PC-3 (cell line): ENCODE measurements at regions of chr7 and their contacts with region 1.

Region 1: GRCh38 chr7:12458520-12459131 is 55.0 kb upstream of the VWDE start:
- DNase-seq: peak; percentile 77
- ATAC-seq: peak; percentile 100
- H3K4me3 ChIP-seq: no peak overlapping the region
- H3K27ac ChIP-seq: no peak overlapping the region
- H3K4me1 ChIP-seq: no peaks in the 10 kb centered on the region
- H3K27me3 ChIP-seq: no peaks in the 10 kb centered on the region
- CTCF ChIP-seq: peak; percentile 88

Region 2: DNA sequence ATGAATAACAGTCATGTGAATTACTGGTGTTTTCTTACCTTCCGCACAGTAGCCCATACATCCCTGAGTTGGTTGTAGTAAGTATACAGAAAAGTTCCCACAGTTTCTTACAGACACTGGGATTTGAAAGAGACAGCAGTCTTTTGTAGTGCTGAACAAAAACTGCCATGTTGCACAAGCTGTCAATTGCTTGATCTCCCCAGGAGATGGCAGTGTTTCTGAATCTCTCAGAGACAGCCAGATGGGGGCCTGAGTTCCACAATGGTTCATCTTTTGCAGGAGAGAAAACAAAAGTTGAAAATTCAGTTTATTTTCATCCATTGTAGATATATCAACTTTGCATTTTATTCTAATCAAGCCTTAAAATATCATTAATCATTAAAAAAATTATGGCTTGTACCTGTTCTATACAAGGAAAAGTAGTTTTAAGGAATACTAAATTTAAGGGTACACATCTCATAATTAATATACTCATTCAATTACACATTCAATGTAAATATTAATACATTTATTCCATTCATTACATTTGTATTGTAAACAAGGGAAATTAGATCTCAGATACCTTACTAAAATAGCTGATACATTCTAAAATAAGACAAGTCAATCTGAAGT is 69.4 kb before region 1 on chr7:
- CTCF ChIA-PET with region 1: interaction called, 3 read pairs
- POLR2A ChIA-PET with region 1: no interaction called
- intact Hi-C with region 1: loop called (anchors 2 kb)
- DNase-seq: peak; percentile 77
- ATAC-seq: peak; percentile 89
- H3K4me3 ChIP-seq: no peak overlapping the region
- H3K27ac ChIP-seq: no peak overlapping the region
- H3K4me1 ChIP-seq: no peaks in the 10 kb centered on the region
- H3K27me3 ChIP-seq: no peaks in the 10 kb centered on the region
- CTCF ChIP-seq: peak; percentile 91

Region 3: GRCh38 chr7:12529971-12530710 is 71.5 kb after region 1 on chr7:
- CTCF ChIA-PET with region 1: no interaction called
- POLR2A ChIA-PET with region 1: no interaction called
- intact Hi-C with region 1: no loop called
- DNase-seq: no peak
- ATAC-seq: no peak
- H3K4me3 ChIP-seq: no peak overlapping the region
- H3K27ac ChIP-seq: no peak overlapping the region
- H3K4me1 ChIP-seq: no peaks in the 10 kb centered on the region
- H3K27me3 ChIP-seq: no peaks in the 10 kb centered on the region
- CTCF ChIP-seq: no peak